Colonic mucosa (tissue), 4 donors: ENCODE measurements at regions of chr2 and their contacts with region 1.

Region 1: DNA sequence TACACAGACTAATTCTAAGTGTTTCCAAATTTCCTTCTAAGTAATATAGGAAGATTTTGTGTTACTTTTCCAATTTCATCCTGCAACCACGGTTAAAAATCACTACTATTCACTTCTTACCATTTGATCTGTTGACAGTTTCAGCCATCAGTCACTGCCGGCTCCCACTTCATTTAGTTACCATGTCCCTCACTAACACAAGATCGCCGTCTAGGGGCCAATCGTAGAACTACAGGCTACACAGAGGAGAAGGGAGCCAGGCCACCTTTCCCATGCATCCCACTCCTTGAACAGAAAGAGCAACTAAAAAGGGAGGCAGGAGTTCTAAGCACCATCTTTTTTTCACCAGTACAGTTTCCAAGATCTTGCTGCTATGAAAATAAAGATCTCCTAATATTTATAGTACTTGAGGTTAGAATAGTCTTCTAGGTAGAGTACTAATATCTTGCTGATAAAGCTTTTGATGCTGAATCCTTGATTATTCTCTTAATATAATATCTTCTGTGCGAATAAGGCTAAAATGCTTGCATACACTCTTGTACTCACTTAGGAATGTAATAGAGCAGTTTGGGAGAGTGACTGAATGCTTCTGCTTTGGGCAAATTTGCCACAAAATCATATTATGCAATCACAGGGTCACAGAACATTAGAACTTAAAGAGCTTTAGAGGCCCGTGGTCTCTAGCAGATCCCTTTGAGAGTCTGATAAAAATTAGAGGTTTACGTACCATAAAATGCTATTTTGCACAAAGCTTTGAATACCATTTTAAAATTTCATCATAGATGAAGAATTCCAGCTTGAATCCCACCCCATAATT is 39.5 kb upstream of the CYP1B1 start:
- DNase-seq: peak; percentile 90
- H3K4me3 ChIP-seq: no peak overlapping the region
- H3K27ac ChIP-seq: no peak overlapping the region
- H3K4me1 ChIP-seq: no peaks in the 10 kb centered on the region
- H3K27me3 ChIP-seq: no peaks in the 10 kb centered on the region
- CTCF ChIP-seq: peak; percentile 90

Region 2: DNA sequence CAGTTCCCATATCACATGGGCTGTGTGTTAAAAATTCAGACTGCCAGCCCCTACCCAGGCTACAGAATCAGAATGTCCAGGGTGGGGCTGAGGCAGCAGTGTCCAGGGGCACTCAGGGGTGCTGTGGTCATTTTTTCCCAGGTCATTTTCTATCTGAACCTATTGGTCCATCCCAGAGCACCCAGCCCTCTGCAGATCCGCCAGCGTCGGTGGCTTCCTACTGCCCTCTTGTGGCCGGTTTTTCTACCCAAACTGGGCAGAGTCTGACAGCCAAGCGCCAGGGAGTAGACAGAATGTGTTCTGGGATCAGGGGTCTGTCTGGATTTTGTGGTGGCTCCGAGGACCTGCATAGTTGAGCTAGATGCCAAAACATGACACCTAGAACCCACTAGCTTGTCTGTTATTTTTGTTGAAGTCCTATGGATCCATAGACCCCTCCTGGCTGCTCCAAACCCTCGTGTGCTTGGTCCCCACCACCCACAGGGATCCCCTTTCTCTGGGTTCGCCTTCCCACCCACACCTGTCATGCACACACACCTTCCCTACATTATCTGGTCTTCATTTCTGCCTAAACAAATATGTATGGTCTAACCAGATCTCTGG is 224.4 kb before region 1 on chr2:
- intact Hi-C with region 1: loop called (anchors 5 kb)
- DNase-seq: peak; percentile 86
- H3K4me3 ChIP-seq: no peak overlapping the region
- H3K27ac ChIP-seq: no peak overlapping the region
- H3K4me1 ChIP-seq: no peaks in the 10 kb centered on the region
- H3K27me3 ChIP-seq: no peaks in the 10 kb centered on the region
- CTCF ChIP-seq: peak; percentile 70

Region 3: DNA sequence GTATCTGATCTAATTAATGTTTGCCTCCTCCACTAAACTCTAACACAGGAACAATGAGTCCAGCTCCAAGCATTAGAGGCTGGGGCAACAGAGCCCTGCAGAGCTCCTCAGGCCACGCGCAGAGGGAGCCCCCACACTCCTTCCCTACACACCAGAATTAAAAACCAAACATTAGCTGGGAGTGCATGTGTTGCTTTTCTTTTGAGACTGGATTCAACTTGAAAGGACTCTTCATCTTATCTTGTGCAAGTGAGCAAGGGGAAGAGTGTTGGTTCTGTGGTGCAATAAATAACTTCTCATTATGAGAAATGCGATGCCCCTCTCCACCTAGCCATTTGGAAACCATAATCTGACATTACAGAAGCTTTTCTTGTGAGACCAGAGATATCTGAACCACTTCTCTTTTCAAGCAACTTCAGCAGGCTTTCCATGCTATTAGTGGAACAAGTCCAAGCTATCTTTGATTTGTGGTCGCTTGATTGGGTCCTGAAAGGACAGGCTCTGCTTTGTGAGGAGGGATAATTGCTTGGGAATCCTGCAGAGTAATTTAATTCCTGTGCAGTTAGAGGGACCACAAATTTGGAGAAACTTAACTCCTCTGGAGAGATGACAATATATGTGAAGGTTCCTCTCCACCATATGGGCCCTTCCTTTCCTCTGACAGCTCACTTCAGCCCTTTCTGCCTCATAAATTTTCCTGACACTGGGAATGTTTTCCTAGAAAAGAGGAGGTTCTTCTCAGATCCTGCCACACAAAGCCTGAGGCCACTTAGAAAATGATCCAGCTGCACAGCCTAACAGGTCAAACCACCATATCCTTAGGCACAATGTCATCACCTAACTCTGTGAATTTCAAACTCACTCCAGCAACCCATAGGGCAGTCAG is 149.2 kb after region 1 on chr2:
- intact Hi-C with region 1: loop called (anchors 10 kb)
- DNase-seq: no peak
- H3K4me3 ChIP-seq: no peak overlapping the region
- H3K27ac ChIP-seq: no peak overlapping the region
- H3K4me1 ChIP-seq: no peaks in the 10 kb centered on the region
- H3K27me3 ChIP-seq: no peaks in the 10 kb centered on the region
- CTCF ChIP-seq: no peak